Common myeloid progenitor, CD34-positive (primary cell): ENCODE measurements at regions of chr17 and their contacts with region 1.

Region 1: DNA sequence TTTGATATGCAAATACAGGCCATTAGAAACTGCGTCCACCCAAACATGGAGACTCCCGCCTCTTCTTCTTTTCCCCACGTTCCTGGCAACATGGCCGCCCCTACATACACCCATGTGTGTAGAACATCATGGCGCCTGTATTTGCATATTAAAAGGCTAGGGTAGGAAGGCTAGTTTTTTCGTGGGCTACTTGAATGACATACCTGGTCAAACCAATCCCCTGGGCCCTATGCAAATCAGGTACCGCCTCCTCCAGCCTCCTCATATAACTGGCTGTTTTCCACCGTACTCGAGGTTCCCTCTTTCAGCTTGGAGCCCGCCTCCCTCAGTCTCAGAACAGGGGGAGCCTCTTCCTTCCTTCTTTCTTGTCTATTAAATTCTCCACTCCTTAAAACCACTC is 840 bp upstream of the CD300LB start:
- DNase-seq: peak; percentile 94 to 98 (median 97)
- H3K4me3 ChIP-seq: peak overlapping the region in 5 of 7 experiments; percentile 56 to 76 (median 63)
- H3K27ac ChIP-seq: peak overlapping the region in 1 of 2 experiments; percentile 60
- H3K4me1 ChIP-seq: peaks cover 10 to 34% (median 23%) of the 10 kb centered on the region in 4 experiments
- H3K27me3 ChIP-seq: no peaks in the 10 kb centered on the region

Region 2: GRCh38 chr17:74478420-74479100 is 53.6 kb before region 1 on chr17:
- CTCF ChIA-PET with region 1: no interaction called
- POLR2A ChIA-PET with region 1: no interaction called
- DNase-seq: peak; percentile 49 to 78 (median 61)
- H3K4me3 ChIP-seq: peak overlapping the region in 2 of 7 experiments; percentile 9 to 36
- H3K27ac ChIP-seq: peak overlapping the region in 1 of 2 experiments; percentile 30
- H3K4me1 ChIP-seq: peaks cover 2 to 28% (median 27%) of the 10 kb centered on the region in 4 experiments
- H3K27me3 ChIP-seq: no peaks in the 10 kb centered on the region

Region 3: GRCh38 chr17:74493381-74493833 is 38.7 kb before region 1 on chr17:
- CTCF ChIA-PET with region 1: interaction called, 11 read pairs
- POLR2A ChIA-PET with region 1: no interaction called
- DNase-seq: peak; percentile 68 to 81 (median 75)
- H3K4me3 ChIP-seq: no peak overlapping the region
- H3K27ac ChIP-seq: no peak overlapping the region
- H3K4me1 ChIP-seq: peaks cover 0 to 29% (median 3%) of the 10 kb centered on the region in 4 experiments
- H3K27me3 ChIP-seq: no peaks in the 10 kb centered on the region

Region 4: GRCh38 chr17:74520016-74520434 is 12.1 kb before region 1 on chr17:
- CTCF ChIA-PET with region 1: interaction called, 13 read pairs
- POLR2A ChIA-PET with region 1: no interaction called
- DNase-seq: peak; percentile 75 to 93 (median 91)
- H3K4me3 ChIP-seq: no peak overlapping the region
- H3K27ac ChIP-seq: no peak overlapping the region
- H3K4me1 ChIP-seq: peaks cover 0 to 54% (median 39%) of the 10 kb centered on the region in 4 experiments
- H3K27me3 ChIP-seq: no peaks in the 10 kb centered on the region

Region 5: DNA sequence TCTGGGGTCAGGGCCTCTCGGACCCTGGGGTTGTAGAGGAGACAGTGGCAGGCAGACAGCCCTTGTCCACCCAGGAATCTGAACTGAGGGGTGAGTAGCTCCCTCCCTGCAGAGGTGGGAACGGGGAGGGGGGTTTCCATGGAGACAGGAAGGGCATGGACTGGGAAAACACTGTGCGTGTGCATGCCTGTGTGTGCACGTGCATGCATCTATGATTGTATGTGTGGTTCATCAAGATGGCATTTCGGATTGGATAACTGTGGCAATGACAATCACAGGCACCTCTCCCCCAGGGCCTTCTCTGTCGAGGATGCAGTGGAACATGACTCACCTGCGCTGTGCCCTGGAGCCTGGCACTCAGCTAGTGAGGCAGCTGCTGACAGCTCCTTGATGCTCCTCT is 19.9 kb after region 1 on chr17:
- CTCF ChIA-PET with region 1: no interaction called
- POLR2A ChIA-PET with region 1: no interaction called
- DNase-seq: no peak
- H3K4me3 ChIP-seq: no peak overlapping the region
- H3K27ac ChIP-seq: no peak overlapping the region
- H3K4me1 ChIP-seq: peaks cover 0 to 21% (median 11%) of the 10 kb centered on the region in 4 experiments
- H3K27me3 ChIP-seq: no peaks in the 10 kb centered on the region

Region 6: DNA sequence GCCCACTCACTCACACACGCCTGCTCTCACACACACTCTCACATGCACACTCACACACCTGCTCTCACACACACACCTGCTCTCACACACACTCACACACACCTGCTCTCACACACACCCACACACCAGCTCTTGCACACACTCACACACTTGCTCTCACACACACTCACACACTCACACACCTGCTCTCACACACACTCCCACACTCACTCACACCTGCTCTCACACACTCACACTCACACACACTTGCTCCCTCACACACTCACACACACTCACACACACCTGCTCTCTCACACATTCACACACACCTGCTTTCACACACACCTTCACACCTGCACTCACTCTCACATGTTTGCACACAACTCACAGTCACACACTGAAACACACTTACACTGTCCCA is 31.2 kb after region 1 on chr17:
- CTCF ChIA-PET with region 1: no interaction called
- POLR2A ChIA-PET with region 1: no interaction called
- DNase-seq: no peak
- H3K4me3 ChIP-seq: no peak overlapping the region
- H3K27ac ChIP-seq: no peak overlapping the region
- H3K4me1 ChIP-seq: peaks cover 0 to 16% (median 8%) of the 10 kb centered on the region in 4 experiments
- H3K27me3 ChIP-seq: no peaks in the 10 kb centered on the region

Region 7: GRCh38 chr17:74584292-74585060 is 52.4 kb after region 1 on chr17:
- CTCF ChIA-PET with region 1: no interaction called
- POLR2A ChIA-PET with region 1: no interaction called
- DNase-seq: no peak
- H3K4me3 ChIP-seq: no peak overlapping the region
- H3K27ac ChIP-seq: no peak overlapping the region
- H3K4me1 ChIP-seq: peaks cover 0 to 8% (median 8%) of the 10 kb centered on the region in 4 experiments
- H3K27me3 ChIP-seq: peaks cover 0 to 2% (median 0%) of the 10 kb centered on the region in 5 experiments